A549 (cell line): ENCODE measurements at regions of chr1 and their contacts with region 1.

Region 1: GRCh38 chr1:55021965-55022546 is 17.3 kb upstream of the PCSK9 start:
- DNase-seq: peak; percentile 83 to 87
- ATAC-seq: peak; percentile 99 to 100
- H3K4me3 ChIP-seq: no peak overlapping the region
- H3K27ac ChIP-seq: peak overlapping the region; percentile 50 to 81; a peak in 4 of 6 replicates
- H3K4me1 ChIP-seq: no peaks in the 10 kb centered on the region
- CTCF ChIP-seq: peak; percentile 79
- EP300 ChIP-seq: no peak
- POLR2A ChIP-seq: no peak
- RAD21 ChIP-seq: peak; percentile 77

Region 2: DNA sequence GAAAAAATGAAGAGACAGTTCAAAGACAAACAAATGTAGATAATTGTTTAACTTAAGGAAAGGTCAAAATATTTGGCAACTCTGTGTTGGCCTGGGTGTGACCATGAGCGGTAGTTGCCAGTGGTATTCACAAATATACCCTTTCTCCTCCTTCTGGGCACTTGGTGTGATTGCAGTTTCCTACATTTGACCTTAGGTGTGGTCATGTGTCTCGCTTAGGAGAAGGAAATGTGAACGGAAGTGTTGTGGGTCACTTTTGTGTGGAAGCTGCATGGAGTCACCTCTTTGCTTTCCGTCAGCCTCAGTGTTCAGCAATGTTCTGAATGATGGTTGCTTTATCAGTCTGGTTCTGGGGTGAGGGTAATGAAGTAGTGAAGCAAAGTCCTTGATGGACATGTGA is 13.8 kb after region 1 on chr1:
- CTCF ChIA-PET with region 1: interaction called, 25 read pairs
- POLR2A ChIA-PET with region 1: no interaction called
- DNase-seq: peak; percentile 55 to 60
- ATAC-seq: peak in 1 of 2 experiments; percentile 29; a peak in 3 of 6 replicates
- H3K4me3 ChIP-seq: no peak overlapping the region
- H3K27ac ChIP-seq: no peak overlapping the region
- H3K4me1 ChIP-seq: peaks cover 24% of the 10 kb centered on the region
- CTCF ChIP-seq: no peak
- EP300 ChIP-seq: no peak
- POLR2A ChIP-seq: no peak
- RAD21 ChIP-seq: no peak; a peak in 1 of 5 replicates

Region 3: DNA sequence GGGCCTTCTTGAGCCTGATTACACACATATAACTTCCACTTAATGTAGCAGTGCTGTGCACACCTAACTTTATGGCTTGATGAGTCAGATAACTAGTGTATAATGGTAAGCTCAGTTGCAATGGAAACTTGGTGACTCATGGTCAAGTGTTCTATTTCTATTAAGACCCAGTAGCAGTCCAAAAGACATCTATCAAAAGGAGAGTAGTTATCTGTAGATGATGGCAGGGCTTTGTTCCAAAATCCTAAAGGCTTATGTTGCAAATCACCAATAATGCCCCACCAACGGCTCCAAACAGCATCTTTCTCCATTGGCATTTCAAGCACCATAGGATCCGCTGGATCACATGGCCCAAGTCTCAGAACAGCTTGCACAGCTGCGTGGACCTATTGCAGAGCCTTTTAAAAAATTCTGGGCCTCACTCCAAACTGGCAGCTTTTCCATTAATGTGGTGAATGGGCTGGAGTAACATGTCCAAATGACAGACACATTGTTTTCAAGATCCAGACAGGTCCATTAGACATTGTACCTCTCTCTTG is 760.0 kb after region 1 on chr1:
- CTCF ChIA-PET with region 1: no interaction called
- POLR2A ChIA-PET with region 1: no interaction called
- DNase-seq: peak in 1 of 2 experiments; percentile 3
- ATAC-seq: 0 out of 6 replicates have a peak, but pooled peaks of 1 of the 2 experiments have one; percentile 47
- H3K4me3 ChIP-seq: no peak overlapping the region
- H3K27ac ChIP-seq: peak overlapping the region in 1 of 2 experiments; percentile 26; a peak in 1 of 6 replicates
- H3K4me1 ChIP-seq: 0 out of 3 replicates have a peak, but pooled peaks cover 5% of the 10 kb centered on the region
- CTCF ChIP-seq: no peak
- EP300 ChIP-seq: no peak
- POLR2A ChIP-seq: no peak
- RAD21 ChIP-seq: no peak